Adrenal gland (tissue), 19 donors: ENCODE measurements at regions of chr1 and their contacts with region 1.

Region 1: GRCh38 chr1:9494929-9495758 is 44.1 kb upstream of the SLC25A33 start:
- DNase-seq: peak in 6 of 7 donors; percentile 40 to 66 (median 54)
- H3K4me3 ChIP-seq: peak overlapping the region in 1 of 4 donors; percentile 41
- H3K27ac ChIP-seq: no peak overlapping the region
- H3K4me1 ChIP-seq: peaks cover 0 to 3% of the 10 kb centered on the region in 2 donors
- H3K27me3 ChIP-seq: no peaks in the 10 kb centered on the region
- CTCF ChIP-seq: peak; percentile 64 to 99 (median 92)
- POLR2A ChIP-seq: no peak

Region 2: DNA sequence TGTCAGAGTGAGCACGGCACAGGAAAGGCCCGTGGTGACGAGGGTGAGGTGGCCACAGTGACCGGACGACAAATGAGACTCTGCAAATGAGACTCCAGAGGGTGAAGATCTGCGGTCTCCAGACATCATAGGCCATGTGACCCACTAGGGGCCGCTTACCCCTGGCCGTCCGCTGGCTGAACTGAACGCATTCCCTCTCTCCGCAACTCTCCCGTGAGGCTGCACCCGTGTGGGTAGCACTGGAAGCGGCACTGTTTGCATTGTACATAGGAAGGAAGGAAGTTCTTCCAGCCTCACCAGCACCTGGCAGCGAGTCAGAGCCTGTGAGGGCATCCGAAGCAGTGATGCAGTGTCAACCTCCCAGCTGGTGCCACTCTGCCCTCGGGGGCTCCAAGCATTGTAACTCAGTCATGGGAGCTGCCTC is 226.1 kb before region 1 on chr1:
- intact Hi-C with region 1: loop called in 1 of 2 experiments (anchors 5 kb)
- DNase-seq: peak in 1 of 7 donors; percentile 29
- H3K4me3 ChIP-seq: no peak overlapping the region
- H3K27ac ChIP-seq: no peak overlapping the region
- H3K4me1 ChIP-seq: peaks cover 0 to 6% of the 10 kb centered on the region in 2 donors
- H3K27me3 ChIP-seq: no peaks in the 10 kb centered on the region
- CTCF ChIP-seq: no peak
- POLR2A ChIP-seq: no peak

Region 3: DNA sequence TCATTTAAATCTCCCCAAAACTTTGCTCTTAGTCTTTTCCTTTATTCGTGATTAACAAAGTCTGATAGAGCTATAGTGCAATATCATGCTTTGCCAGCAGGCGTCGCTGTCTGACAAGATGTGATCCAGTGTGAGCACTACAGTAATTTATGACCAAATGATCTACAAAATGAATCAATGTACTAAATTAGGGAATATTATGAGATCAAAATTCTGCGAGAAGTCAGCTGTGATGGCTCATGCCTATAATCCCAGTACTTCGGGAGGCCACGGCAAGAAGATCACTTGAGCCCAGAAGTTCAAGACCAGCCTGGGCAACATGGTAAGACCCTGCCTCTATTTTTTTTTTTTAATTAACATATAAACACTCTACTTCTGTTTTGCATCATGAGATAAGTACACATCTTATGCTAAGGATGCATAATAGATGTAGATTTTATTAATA is 206.0 kb before region 1 on chr1:
- intact Hi-C with region 1: loop called (anchors 5 kb)
- DNase-seq: peak; percentile 65 to 95 (median 84)
- H3K4me3 ChIP-seq: no peak overlapping the region
- H3K27ac ChIP-seq: peak overlapping the region in 4 of 5 donors; percentile 71 to 91 (median 83)
- H3K4me1 ChIP-seq: peaks cover 10 to 29% of the 10 kb centered on the region in 2 donors
- H3K27me3 ChIP-seq: no peaks in the 10 kb centered on the region
- CTCF ChIP-seq: peak; percentile 90 to 98 (median 98)
- POLR2A ChIP-seq: no peak

Region 4: DNA sequence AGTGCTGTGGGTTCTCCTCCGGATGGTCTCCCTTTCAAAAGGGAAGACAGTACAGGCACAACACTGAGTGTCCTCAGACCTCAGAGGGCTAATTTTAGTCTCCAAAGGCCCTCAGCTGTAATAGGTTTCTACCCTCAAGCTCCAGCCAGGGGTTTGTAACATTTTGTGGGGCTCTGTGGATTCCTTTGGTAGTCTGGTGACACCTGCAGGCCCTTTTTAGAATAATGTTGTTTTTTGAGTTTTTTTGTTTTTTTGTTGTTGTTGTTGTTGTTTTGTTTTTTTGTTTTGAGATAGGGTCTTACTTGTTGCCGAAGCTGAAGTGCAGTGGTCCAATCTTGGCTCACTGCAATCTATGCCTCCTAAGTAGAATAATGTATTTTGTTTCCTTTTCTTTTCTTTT is 78.6 kb after region 1 on chr1:
- intact Hi-C with region 1: loop called (anchors 2 to 5 kb)
- DNase-seq: peak in 1 of 7 donors; percentile 27
- H3K4me3 ChIP-seq: no peak overlapping the region
- H3K27ac ChIP-seq: no peak overlapping the region
- H3K4me1 ChIP-seq: no peaks in the 10 kb centered on the region
- H3K27me3 ChIP-seq: no peaks in the 10 kb centered on the region
- CTCF ChIP-seq: peak in 5 of 6 experiments; percentile 38 to 76 (median 50)
- POLR2A ChIP-seq: no peak